Activated CD4-positive, alpha-beta T cell treated with anti-CD3 and anti-CD28 coated beads for 36 hours (primary cell): ENCODE measurements at regions of chr1 and their contacts with region 1.

Region 1: GRCh38 chr1:159197561-159198557 is 6.8 kb upstream of the ACKR1 start:
- DNase-seq: peak; percentile 80
- ATAC-seq: peak; percentile 77
- H3K4me3 Mint-ChIP-seq: no peak overlapping the region
- H3K27ac Mint-ChIP-seq: no peak overlapping the region
- H3K4me1 Mint-ChIP-seq: peaks cover 4% of the 10 kb centered on the region
- H3K27me3 Mint-ChIP-seq: peaks cover 31% of the 10 kb centered on the region

Region 2: DNA sequence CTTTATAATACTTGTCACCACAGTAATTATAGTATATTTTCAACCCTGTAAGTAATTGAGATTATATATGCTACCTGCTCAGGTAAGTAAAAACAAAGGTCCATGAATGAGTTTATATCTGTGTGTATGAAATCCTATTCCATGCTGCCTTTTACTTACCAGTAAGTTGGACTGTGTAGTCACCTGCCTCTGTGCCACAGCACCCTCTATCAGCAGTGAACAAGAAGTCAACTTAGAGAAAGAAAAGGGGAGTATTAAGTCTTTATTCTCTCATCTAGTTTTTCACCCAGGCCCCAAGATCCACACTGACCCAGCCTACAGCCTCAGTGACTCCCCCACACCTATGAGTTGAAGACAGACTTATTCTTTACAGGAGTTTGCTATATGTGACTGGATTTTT is 225.0 kb before region 1 on chr1:
- CTCF ChIA-PET with region 1: no interaction called
- POLR2A ChIA-PET with region 1: no interaction called
- intact Hi-C with region 1: no loop called
- DNase-seq: peak; percentile 39
- ATAC-seq: no peak
- H3K4me3 Mint-ChIP-seq: no peak overlapping the region
- H3K27ac Mint-ChIP-seq: no peak overlapping the region
- H3K4me1 Mint-ChIP-seq: peaks cover 30% of the 10 kb centered on the region
- H3K27me3 Mint-ChIP-seq: no peaks in the 10 kb centered on the region

Region 3: DNA sequence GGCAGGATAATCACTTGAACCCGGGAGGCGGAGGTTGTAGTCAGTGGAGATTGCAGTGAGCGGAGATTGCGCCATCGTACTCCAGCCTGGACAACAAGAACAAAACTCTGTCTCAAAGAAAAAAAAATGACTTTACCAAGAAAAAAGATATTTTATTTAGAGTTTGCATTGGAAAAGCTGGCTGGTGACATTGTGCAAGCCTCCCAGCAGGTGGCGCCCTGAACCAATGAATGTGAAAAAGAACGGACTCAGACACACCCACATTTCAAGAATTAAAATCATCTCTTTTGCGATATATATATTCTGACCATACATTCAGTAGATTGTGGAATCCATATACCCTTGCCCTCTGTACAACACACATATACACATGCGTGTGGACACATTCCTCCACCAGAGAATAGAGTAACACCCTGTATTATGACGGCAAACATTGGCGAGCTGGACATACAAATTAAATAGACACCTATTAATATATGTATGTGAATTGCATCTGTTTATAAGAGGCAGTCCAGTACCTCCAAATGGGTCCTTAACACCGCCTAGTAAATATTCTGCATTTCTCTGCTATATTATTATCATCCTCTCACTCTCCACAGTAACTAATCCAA is 65.5 kb before region 1 on chr1:
- CTCF ChIA-PET with region 1: interaction called, 50 read pairs
- POLR2A ChIA-PET with region 1: no interaction called
- intact Hi-C with region 1: loop called (anchors 1 to 5 kb)
- DNase-seq: peak; percentile 87
- ATAC-seq: peak; percentile 51
- H3K4me3 Mint-ChIP-seq: no peak overlapping the region
- H3K27ac Mint-ChIP-seq: no peak overlapping the region
- H3K4me1 Mint-ChIP-seq: no peaks in the 10 kb centered on the region
- H3K27me3 Mint-ChIP-seq: peaks cover 5% of the 10 kb centered on the region

Region 4: DNA sequence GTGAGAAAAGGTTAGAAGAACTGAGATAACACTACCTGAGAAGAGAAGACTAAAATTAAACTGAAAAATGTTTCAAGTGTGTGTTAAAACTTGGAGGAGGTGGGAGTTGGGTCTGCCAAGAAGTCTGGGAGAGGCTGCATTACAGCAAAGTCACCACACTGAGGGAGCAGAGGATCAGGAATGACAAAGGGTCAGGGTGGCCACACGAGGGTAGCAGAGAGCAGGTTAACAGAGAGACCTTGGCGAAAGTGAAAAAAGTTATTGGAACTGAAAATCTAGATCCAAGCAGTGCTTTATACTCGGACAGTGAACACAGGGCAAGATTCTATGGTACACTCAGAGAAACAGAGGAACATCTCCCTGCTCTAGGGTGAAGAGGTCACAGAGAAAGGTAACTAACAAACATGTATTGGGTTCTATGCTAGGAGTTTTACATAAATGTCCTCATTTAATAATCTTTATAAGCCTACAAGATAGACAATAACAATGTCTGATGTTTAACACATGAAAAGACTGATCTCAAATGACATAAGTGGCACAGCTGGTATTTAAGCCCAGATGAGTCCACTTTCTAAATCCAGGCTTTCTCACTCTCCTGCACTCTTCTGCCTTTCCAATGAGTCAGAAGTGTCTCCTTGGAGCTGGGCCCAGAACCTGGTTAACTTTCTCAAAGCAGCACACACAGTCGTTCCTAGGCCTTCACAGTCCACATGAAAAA is 36.7 kb before region 1 on chr1:
- CTCF ChIA-PET with region 1: interaction called, 9 read pairs
- POLR2A ChIA-PET with region 1: no interaction called
- intact Hi-C with region 1: loop called in 1 of 2 experiments (anchors 1 kb)
- DNase-seq: peak; percentile 82
- ATAC-seq: peak; percentile 83
- H3K4me3 Mint-ChIP-seq: no peak overlapping the region
- H3K27ac Mint-ChIP-seq: no peak overlapping the region
- H3K4me1 Mint-ChIP-seq: peaks cover 2% of the 10 kb centered on the region
- H3K27me3 Mint-ChIP-seq: peaks cover 39% of the 10 kb centered on the region

Region 5: GRCh38 chr1:159184201-159184600 is 13.7 kb before region 1 on chr1:
- CTCF ChIA-PET with region 1: interaction called, 16 read pairs
- POLR2A ChIA-PET with region 1: no interaction called
- intact Hi-C with region 1: no loop called
- DNase-seq: no peak
- ATAC-seq: no peak
- H3K4me3 Mint-ChIP-seq: no peak overlapping the region
- H3K27ac Mint-ChIP-seq: no peak overlapping the region
- H3K4me1 Mint-ChIP-seq: peaks cover 3% of the 10 kb centered on the region
- H3K27me3 Mint-ChIP-seq: peaks cover 52% of the 10 kb centered on the region